ENCODE measurements at regions of chr11 and their contacts with region 1.

Region 1: GRCh38 chr11:9506489-9507276 is 45.9 kb downstream of the ZNF143 start:
- DNase-seq: peak; percentile 42
- H3K4me3 ChIP-seq: no peak overlapping the region
- CTCF ChIP-seq: peak; percentile 69

Region 2: GRCh38 chr11:9015677-9016076 is 491.0 kb before region 1 on chr11:
- CTCF ChIA-PET with region 1: interaction called, 62 read pairs
- POLR2A ChIA-PET with region 1: no interaction called
- DNase-seq: peak; percentile 5
- H3K4me3 ChIP-seq: no peak overlapping the region
- CTCF ChIP-seq: peak; percentile 81

Region 3: GRCh38 chr11:9362393-9362863 is 144.3 kb before region 1 on chr11:
- CTCF ChIA-PET with region 1: no interaction called
- POLR2A ChIA-PET with region 1: no interaction called
- DNase-seq: no peak
- H3K4me3 ChIP-seq: no peak overlapping the region
- CTCF ChIP-seq: no peak

Region 4: GRCh38 chr11:9448576-9449352 is 57.9 kb before region 1 on chr11:
- CTCF ChIA-PET with region 1: interaction called, 13 read pairs
- POLR2A ChIA-PET with region 1: no interaction called
- DNase-seq: no peak
- H3K4me3 ChIP-seq: no peak overlapping the region
- CTCF ChIP-seq: no peak

Region 5: DNA sequence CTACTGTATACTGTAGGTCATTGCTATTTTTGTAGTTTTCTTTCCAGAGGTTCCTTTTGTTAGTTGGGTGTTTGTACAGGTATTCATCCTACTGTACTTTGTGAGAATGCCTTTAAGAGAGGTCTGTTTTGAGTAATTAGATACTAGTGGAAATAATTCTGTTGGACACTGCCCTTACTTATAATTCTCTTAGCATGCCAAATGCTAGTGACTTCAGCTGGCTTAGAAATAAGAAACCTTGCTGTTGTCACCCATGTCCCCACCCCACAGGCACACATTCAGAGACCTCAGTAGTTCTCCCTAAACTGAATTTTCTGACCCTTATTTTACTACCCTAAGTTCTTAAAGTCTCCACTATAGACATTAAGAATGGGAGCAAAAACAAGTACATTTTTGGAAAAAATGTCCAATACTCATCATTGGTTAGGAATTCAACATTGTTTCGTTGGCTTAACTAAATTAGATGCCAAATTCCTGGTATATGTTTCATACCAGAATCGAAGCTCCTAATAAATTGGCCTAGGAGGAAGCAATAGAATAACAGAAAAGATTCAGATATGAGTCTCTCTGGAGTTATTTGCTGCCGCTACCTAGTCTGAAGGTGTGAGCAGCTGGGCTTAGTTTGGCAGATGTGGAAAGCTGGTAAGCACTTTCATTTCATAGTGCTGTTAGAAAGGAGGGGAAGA is 17.5 kb before region 1 on chr11:
- CTCF ChIA-PET with region 1: interaction called, 44 read pairs
- POLR2A ChIA-PET with region 1: no interaction called
- DNase-seq: peak; percentile 33
- H3K4me3 ChIP-seq: peak overlapping the region; percentile 21
- CTCF ChIP-seq: no peak

Region 6: GRCh38 chr11:9687711-9688477 is 181.2 kb after region 1 on chr11:
- CTCF ChIA-PET with region 1: no interaction called
- POLR2A ChIA-PET with region 1: no interaction called
- DNase-seq: no peak
- H3K4me3 ChIP-seq: no peak overlapping the region
- CTCF ChIP-seq: no peak

Region 7: DNA sequence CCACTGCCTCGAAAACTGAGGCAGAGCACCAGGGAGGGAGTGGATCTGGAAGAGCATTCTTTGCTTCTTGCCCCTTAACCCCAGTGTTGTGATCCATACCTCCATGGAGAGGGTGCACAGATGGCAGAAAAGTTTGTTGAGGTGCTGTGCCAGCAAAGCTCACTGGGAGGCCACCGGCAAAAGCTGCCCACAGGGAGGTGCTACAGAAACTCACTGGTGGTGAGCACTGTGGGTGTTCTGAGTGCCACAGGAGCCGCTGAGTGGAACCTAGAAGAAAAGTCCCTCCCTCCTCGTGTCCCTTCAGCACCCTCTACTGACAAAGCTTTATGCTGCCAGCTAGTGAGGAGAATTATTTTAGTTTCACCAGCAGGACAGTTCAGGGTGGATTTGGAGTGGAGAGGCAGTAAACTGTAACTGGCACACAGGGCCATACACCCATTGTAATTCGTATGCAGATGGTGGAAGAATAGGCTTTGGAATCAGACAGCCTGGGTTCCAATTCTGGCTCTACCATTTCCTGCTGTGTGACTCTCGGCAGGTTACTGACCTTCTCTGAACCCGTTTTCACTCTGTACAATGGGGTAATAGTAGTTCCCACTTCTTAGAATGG is 241.8 kb after region 1 on chr11:
- CTCF ChIA-PET with region 1: interaction called, 12 read pairs
- POLR2A ChIA-PET with region 1: no interaction called
- DNase-seq: no peak
- H3K4me3 ChIP-seq: no peak overlapping the region
- CTCF ChIP-seq: peak; percentile 54